ENCODE measurements at regions of chr3 and their contacts with region 1.

Region 1: GRCh38 chr3:98329392-98330124 is 24.1 kb upstream of the OR5K4 start:
- DNase-seq: peak; percentile 43 to 73
- H3K4me3 ChIP-seq: no peak overlapping the region
- H3K27ac ChIP-seq: no peak overlapping the region
- H3K4me1 ChIP-seq: no peaks in the 10 kb centered on the region
- H3K27me3 ChIP-seq: peaks cover 0 to 7% (median 0%) of the 10 kb centered on the region in 3 donors
- CTCF ChIP-seq: peak in 5 of 7 experiments; percentile 25 to 66 (median 54)
- EP300 ChIP-seq: no peak
- POLR2A ChIP-seq: no peak

Region 2: GRCh38 chr3:98039322-98040024 is 290.1 kb before region 1 on chr3:
- intact Hi-C with region 1: loop called (anchors 5 kb)
- DNase-seq: peak; percentile 59 to 89
- H3K4me3 ChIP-seq: peak overlapping the region; percentile 27 to 38 (median 32)
- H3K27ac ChIP-seq: peak overlapping the region in 1 of 5 donors; percentile 49
- H3K4me1 ChIP-seq: peaks cover 0 to 7% (median 6%) of the 10 kb centered on the region in 4 donors
- H3K27me3 ChIP-seq: peaks cover 0 to 27% (median 0%) of the 10 kb centered on the region in 3 donors
- CTCF ChIP-seq: peak in 5 of 7 experiments; percentile 71 to 96 (median 86)
- EP300 ChIP-seq: no peak
- POLR2A ChIP-seq: no peak